Activated CD4-positive, alpha-beta T cell treated with anti-CD3 and anti-CD28 coated beads, Interleukin-2, amount 10 ng/mL, durations not matched to agents 24 days and 14 days (primary cell): ENCODE measurements at regions of chr17 and their contacts with region 1.

Region 1: DNA sequence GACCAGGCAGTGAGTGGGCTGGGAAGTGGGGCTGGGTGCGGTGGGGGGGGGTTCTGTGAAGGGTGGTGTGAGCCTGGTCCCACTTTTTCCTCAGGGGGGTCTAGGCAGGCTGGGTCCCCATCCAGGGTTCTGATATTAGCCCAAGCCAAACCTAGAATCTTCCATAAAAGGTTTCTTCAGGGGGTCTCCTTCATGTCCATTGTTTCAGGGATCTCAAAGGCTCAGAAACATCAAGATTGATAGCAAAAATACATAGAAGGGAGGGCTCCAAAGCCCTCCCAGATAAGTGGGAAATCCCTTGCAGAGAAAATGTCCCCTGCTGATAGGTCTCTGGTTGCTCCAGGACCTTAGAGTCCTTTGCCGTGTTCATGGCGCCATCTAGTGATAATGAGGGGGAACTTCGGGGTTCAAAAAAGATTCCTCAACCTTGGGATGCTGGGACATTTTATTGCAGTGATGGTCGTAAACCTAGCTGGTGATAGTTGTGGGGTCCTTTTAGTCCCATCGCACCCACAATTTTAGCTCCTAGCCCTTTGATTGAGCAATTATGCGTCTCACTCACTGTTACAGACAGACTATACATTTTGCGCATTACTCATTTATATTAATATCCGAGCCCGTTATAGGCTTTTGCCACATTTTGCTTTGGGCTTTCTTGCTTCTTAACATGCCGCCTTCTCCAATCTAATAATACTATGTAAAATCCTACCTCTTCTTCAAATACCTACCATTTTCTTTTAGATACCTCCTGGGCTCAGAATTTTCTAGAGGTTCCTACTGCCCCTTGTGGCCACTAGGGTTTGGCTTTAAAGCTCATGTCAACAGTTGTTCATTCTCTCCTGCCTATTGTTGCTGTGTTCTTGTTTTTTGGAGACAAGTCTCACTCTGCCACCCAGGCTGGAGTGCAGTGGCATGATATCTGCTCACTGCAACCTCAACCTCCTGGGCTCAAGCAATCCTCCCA is 35.1 kb downstream of the IGF2BP1 start:
- DNase-seq: peak; percentile 85
- H3K4me3 Mint-ChIP-seq: no peak overlapping the region
- H3K27ac Mint-ChIP-seq: no peak overlapping the region
- H3K4me1 Mint-ChIP-seq: peaks cover 6% of the 10 kb centered on the region
- H3K27me3 Mint-ChIP-seq: peaks cover 7% of the 10 kb centered on the region

Region 2: GRCh38 chr17:48671697-48672171 is 360.5 kb before region 1 on chr17:
- intact Hi-C with region 1: loop called (anchors 2 kb)
- DNase-seq: peak; percentile 90
- H3K4me3 Mint-ChIP-seq: peak overlapping the region; percentile 47
- H3K27ac Mint-ChIP-seq: no peak overlapping the region
- H3K4me1 Mint-ChIP-seq: peaks cover 4% of the 10 kb centered on the region
- H3K27me3 Mint-ChIP-seq: peaks cover 53% of the 10 kb centered on the region

Region 3: DNA sequence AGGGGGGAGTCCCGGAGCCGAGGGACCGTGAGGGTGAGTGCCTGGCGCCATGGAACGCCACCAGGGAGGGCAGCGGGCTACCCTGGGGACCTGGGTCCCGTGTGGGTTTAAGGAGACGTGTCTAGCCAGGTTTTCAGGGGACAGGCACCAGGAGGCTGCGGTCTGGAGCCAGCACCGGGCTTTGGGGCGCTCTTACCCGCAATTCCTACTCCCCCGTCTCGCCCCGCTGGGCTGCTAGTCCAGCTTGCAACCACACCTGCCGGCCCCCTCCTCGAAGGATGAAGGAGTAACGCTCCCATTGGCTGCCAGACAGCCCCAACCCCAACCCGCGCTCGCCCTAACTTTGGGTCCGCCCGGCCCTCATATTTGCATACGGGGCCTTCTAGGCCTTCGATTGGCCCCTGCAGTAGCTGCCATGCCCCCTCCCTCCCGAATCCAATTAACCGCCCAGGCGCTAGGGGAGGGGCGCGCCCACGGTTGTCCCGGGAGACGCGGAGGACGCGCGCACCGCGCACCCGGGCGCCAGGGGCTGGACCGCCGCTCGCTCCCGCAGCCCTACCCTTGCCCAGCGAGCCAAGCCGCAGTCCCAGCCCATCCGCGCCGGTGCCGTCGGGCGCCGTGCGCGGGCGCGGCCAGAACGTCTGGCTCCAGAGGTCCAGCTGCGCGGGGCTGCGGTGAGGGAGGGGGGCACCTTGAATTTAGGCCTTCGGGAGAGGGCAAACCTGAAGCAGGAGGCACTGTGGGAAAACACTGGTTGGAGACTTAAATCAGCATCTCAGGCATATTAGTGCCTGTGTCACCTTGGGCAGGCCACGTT is 215.3 kb before region 1 on chr17 and contains the start of gene TTLL6:
- intact Hi-C with region 1: loop called (anchors 1 kb)
- DNase-seq: peak; percentile 95
- H3K4me3 Mint-ChIP-seq: peak within 1 kb of the TSS; percentile 86
- H3K27ac Mint-ChIP-seq: no peak within 1 kb of the TSS
- H3K4me1 Mint-ChIP-seq: peaks cover 20% of the 10 kb centered on the region
- H3K27me3 Mint-ChIP-seq: peaks cover 65% of the 10 kb centered on the region
- total RNA-seq, gene TTLL6: not detected in 2 replicates